HEK293 (cell line): ENCODE measurements at regions of chr1 and their contacts with region 1.

Region 1: DNA sequence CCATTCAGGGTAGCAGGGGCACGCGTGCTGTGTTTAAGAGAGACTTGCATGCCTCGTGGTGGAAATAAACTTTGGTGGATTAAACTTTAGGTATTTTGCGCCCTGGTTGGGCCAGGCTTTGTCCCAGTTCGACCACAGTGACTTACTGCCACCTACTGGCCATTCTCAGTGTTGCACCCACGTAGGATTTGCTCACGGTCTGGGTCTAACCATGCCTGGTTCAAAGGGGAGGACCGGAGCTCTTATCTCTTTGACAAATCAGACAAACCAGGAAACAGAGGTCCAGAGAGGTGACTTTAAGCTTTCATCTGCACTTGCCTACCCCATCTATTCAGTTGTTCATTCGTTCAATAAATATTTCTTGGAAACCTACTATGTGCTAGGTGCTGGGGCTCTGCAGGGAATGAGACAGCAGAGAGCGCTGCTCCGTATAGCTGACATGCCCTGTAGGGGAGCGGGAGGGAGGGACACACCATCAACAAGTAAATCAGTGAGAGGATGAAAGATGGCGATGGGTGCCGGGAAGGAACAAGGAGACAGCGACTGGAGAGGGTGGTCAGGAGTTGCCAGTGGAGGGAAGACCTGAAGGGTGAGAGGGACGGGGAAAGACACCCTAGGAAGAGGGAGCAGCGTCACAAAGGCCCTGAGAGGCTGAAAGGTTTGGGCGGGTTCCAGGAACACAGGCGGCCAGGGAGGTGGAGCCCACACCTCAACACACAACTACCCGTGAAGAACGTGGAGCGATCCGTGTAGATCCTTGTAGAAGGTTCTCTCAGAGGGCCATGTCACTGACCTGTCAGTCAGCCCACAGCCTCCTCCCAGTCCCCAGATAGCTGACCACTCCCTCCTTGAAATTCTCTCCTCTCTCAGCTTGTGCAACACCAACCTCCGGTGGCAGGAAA is 27.2 kb upstream of the TINAGL1 start:
- H3K4me3 ChIP-seq: 0 out of 2 replicates have a peak overlapping the region, but pooled peaks have one; percentile 1
- H3K27ac ChIP-seq: no peak overlapping the region
- H3K4me1 ChIP-seq: no peaks in the 10 kb centered on the region
- CTCF ChIP-seq: peak; percentile 81

Region 2: GRCh38 chr1:31394628-31395193 is 154.4 kb before region 1 on chr1:
- CTCF ChIA-PET with region 1: interaction called, 46 read pairs
- POLR2A ChIA-PET with region 1: interaction called, 4 read pairs
- H3K4me3 ChIP-seq: peak overlapping the region; percentile 27
- H3K27ac ChIP-seq: no peak overlapping the region
- H3K4me1 ChIP-seq: no peaks in the 10 kb centered on the region
- CTCF ChIP-seq: peak; percentile 93

Region 3: GRCh38 chr1:31448941-31449340 is 100.2 kb before region 1 on chr1:
- CTCF ChIA-PET with region 1: interaction called, 12 read pairs
- POLR2A ChIA-PET with region 1: no interaction called
- H3K4me3 ChIP-seq: no peak overlapping the region
- H3K27ac ChIP-seq: no peak overlapping the region
- H3K4me1 ChIP-seq: no peaks in the 10 kb centered on the region
- CTCF ChIP-seq: no peak

Region 4: GRCh38 chr1:31531177-31531999 is 17.8 kb before region 1 on chr1:
- CTCF ChIA-PET with region 1: interaction called, 27 read pairs
- POLR2A ChIA-PET with region 1: interaction called, 3 read pairs
- H3K4me3 ChIP-seq: no peak overlapping the region
- H3K27ac ChIP-seq: no peak overlapping the region
- H3K4me1 ChIP-seq: peaks cover 10% of the 10 kb centered on the region
- CTCF ChIP-seq: no peak

Region 5: DNA sequence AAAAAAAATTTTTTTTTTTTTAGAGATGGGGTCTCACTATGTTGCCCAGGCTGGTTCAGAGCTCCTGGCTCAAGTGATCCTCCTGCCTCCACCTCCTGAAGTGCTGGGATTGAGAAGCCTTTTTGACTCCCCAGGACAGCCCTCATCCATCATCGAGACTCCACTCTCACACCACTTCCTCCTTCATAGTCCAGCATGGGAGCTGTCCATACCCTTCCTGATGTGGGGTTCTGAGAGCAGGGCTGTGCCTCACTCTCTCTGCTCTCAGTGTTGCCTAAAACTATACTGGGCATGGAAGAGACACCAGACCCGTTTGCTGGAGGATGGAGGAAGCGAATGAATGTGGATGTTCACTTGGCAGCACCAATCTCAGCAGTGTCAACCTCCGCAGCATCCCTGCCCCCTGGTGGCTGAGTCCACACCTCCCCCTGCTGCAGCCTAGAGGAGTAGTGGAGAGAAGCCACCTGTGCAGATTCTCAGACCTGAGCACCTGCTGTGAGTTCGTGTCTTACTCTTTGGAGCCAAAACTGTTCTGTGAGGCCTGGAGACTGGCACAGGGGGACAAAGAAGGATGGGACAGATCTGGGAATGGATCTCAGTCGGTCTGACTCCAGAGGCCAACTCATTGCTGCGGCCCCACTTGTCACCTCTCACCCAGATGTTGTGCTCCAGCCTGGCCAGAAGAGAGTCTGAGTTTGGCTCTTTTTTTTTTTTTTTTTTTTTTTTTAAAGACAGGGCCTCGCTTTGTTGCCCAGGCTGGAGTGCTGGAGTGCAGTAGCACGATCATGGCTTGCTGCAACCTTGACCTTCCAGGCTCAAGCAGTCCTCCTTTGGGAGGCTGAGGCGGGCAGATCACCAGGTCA is 44.8 kb after region 1 on chr1:
- CTCF ChIA-PET with region 1: interaction called, 22 read pairs
- POLR2A ChIA-PET with region 1: no interaction called
- H3K4me3 ChIP-seq: no peak overlapping the region
- H3K27ac ChIP-seq: no peak overlapping the region
- H3K4me1 ChIP-seq: no peaks in the 10 kb centered on the region
- CTCF ChIP-seq: peak; percentile 87

Region 6: GRCh38 chr1:31849653-31850052 is 300.5 kb after region 1 on chr1:
- CTCF ChIA-PET with region 1: no interaction called
- POLR2A ChIA-PET with region 1: no interaction called
- H3K4me3 ChIP-seq: no peak overlapping the region
- H3K27ac ChIP-seq: no peak overlapping the region
- H3K4me1 ChIP-seq: no peaks in the 10 kb centered on the region
- CTCF ChIP-seq: no peak